Activated CD4-positive, alpha-beta T cell treated with anti-CD3 and anti-CD28 coated beads, Interleukin-2, amount 10 ng/mL, durations not matched to agents 24 days and 14 days (primary cell): ENCODE measurements at regions of chr9 and their contacts with region 1.

Region 1: GRCh38 chr9:137223078-137223970 is 1.3 kb upstream of the RNF208 start:
- DNase-seq: peak; percentile 99
- H3K4me3 Mint-ChIP-seq: peak overlapping the region; percentile 88
- H3K27ac Mint-ChIP-seq: peak overlapping the region; percentile 90
- H3K4me1 Mint-ChIP-seq: peaks cover 6% of the 10 kb centered on the region
- H3K27me3 Mint-ChIP-seq: peaks cover 2% of the 10 kb centered on the region

Region 2: DNA sequence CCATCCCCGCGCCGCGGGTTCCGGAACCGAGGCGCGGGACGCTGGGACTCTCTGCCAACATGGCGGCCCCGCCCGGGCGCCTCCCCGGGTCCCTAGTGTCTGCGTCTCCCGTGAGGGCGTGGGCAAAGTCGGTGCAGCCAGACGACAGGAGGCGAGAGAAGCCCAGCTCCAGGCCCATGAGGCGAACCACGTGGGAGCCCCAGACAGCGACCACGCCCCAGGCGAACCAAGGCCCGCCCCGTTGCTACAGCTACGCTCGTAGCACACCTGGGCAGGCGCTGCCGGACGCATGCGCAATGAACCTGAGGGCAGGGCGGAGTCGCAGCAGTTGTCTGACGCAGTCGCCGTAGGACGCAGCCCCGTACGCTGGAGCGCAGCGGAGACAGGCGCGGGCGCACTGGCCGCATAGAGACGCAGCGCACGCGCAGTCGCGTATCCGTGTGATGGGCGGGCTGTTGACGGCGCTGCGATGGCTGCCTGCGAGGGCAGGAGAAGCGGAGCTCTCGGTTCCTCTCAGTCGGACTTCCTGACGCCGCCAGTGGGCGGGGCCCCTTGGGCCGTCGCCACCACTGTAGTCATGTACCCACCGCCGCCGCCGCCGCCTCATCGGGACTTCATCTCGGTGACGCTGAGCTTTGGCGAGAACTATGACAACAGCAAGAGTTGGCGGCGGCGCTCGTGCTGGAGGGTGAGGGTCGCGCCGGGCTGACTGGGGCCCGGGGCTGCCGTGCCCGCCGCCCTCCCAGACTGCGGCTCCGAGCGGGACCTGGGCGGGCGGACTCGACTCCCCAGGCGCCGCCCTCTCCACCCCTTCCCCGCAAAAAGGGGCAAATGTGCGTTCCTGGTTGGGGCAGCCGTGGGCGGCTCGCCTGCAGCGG is 136.6 kb before region 1 on chr9 and contains the start of gene MAN1B1:
- intact Hi-C with region 1: loop called (anchors 1 kb)
- DNase-seq: peak; percentile 100
- H3K4me3 Mint-ChIP-seq: peak within 1 kb of the TSS; percentile 94
- H3K27ac Mint-ChIP-seq: peak within 1 kb of the TSS; percentile 98
- H3K4me1 Mint-ChIP-seq: peaks cover 35% of the 10 kb centered on the region
- H3K27me3 Mint-ChIP-seq: peaks cover 3% of the 10 kb centered on the region
- total RNA-seq, gene MAN1B1: 49.7 and 50.1 TPM in 2 replicates

Region 3: DNA sequence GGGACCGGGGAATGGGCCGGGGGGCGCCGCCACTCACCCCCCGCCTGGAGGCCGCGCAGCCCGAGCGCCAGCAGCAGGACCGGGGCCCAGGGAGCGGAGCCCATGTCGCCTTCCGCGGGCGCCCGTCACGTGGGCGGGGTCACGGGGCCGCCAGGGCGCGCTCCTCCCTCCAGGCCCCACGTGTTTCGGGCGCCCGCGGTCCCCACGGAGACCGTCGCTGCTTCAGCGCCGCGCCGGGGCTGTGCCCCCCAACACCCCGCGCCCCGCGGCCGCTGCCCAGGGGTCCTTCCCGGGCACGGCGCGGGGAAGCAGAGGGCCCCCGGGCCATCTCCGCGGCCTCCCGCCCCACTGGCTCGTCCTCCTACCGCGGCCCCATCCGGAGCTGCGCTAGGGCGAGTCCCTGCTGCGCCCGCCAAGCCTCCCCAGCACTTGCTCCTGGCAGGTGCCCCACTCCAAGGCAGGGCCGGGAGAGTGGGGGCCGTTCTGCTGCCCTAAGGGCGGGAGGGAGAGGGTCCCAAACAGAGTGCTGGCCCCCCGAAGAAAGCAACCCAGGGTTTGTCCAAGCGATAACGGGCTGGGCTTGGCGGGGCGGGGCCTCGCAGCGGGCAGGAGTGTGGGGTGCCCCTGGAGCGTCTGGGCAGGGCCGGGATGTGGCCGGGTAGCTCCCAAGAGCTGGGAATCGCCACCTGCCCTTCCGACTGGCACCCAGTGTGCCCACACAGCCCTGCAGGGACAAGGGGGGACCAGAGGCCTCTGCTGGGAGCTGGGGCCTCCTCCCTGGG is 108.5 kb before region 1 on chr9 and contains the start of gene DPP7:
- intact Hi-C with region 1: loop called (anchors 1 kb)
- DNase-seq: peak; percentile 96
- H3K4me3 Mint-ChIP-seq: peak within 1 kb of the TSS; percentile 83
- H3K27ac Mint-ChIP-seq: peak within 1 kb of the TSS; percentile 78
- H3K4me1 Mint-ChIP-seq: peaks cover 8% of the 10 kb centered on the region
- H3K27me3 Mint-ChIP-seq: no peaks in the 10 kb centered on the region
- total RNA-seq, gene DPP7: 365 and 375 TPM in 2 replicates

Region 4: DNA sequence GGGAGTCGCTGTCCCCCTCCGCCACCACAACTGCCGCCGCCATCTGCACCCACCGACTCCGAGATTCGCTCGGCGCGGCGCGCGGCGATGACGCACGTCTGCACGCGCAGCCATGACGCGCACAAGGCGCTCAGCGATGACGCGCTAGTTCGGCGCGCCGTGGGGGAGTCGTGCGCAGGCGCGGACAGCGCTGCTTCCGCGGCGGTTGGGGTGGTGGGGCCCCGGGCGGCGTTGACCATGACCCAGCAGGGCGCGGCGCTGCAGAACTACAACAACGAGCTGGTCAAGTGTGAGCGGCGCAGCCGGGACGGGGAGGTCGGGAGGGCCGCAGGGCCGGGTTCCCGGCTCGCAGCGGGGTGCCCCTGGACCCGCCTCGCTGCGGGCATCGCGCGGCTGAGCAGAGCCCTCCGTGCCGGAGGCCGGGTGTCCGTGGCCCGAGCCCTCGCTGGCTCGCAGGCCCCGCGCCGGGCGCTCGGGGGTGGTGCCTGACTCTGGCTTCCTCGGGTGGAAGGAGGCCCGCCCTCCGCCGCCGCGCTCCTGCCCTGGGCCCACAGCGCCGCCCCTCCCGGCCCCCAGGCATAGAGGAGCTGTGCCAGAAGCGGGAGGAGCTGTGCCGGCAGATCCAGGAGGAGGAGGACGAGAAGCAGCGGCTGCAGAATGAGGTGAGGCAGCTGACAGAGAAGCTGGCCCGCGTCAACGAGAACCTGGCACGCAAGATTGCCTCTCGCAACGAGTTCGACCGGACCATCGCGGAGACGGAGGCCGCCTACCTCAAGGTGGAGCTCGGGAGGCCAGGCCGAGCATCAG is 34.6 kb before region 1 on chr9 and contains the starts of genes ANAPC2 and SSNA1:
- intact Hi-C with region 1: loop called (anchors 1 kb)
- DNase-seq: peak; percentile 99
- H3K4me3 Mint-ChIP-seq: peak within 1 kb of the TSS; percentile 91
- H3K27ac Mint-ChIP-seq: peak within 1 kb of the TSS; percentile 94
- H3K4me1 Mint-ChIP-seq: peaks cover 22% of the 10 kb centered on the region
- H3K27me3 Mint-ChIP-seq: no peaks in the 10 kb centered on the region
- total RNA-seq, gene ANAPC2: 57.4 and 58.7 TPM in 2 replicates
- total RNA-seq, gene SSNA1: 95.1 and 95.8 TPM in 2 replicates

Region 5: DNA sequence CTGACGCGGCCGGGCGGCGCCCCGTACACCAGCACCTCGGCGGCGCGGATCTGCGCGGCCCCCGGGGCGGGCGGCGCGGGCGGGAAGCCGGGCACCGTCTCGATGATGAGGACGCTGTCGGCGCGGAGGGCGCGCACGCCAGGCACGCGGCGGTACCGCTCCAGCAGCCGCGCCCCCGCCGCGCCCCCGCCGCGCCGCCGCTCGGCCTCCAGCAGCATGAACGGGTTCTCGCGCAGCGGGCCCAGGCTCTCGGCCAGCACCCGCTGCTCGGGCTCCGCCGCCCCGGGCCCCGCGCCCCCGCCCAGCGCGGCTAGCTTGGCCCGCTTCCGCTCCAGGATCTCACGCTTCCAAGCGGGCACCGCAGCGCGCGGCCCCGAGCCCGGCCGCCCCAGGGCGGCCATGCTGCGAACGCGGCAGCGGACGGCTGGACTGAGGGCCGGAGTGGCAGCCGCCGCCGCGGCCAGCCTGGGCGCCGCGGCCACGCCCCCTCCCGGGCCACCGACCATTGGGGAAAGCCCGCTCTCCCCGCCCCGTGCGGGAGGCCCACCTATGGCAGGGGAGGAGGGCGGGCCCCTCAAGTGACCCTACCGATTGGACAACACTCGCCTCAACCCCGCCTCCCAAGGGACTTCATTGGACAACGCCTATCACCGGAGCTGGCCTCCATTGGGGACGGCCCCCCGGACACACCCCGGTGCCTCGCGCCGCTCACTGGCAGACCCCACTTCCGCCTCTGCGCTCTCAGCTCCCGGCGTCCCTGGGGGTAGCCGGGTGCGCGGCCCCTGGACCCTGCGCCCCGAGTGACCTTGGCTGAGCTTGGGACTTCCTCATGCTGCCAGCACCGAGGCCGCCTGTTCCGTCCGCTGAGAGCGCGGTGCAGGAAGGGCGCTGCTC is 22.8 kb before region 1 on chr9 and contains the start of gene TPRN:
- intact Hi-C with region 1: loop called (anchors 1 kb)
- DNase-seq: peak; percentile 100
- H3K4me3 Mint-ChIP-seq: peak within 1 kb of the TSS; percentile 87
- H3K27ac Mint-ChIP-seq: peak within 1 kb of the TSS; percentile 65
- H3K4me1 Mint-ChIP-seq: peaks cover 14% of the 10 kb centered on the region
- H3K27me3 Mint-ChIP-seq: peaks cover 2% of the 10 kb centered on the region
- total RNA-seq, gene TPRN: 15.1 and 16.3 TPM in 2 replicates

Region 6: GRCh38 chr9:137240861-137241489 is 17.7 kb after region 1 on chr9 and contains the start of gene TUBB4B:
- intact Hi-C with region 1: loop called (anchors 1 kb)
- DNase-seq: peak; percentile 99
- H3K4me3 Mint-ChIP-seq: peak within 1 kb of the TSS; percentile 90
- H3K27ac Mint-ChIP-seq: peak within 1 kb of the TSS; percentile 95
- H3K4me1 Mint-ChIP-seq: peaks cover 19% of the 10 kb centered on the region
- H3K27me3 Mint-ChIP-seq: peaks cover 2% of the 10 kb centered on the region
- total RNA-seq, gene TUBB4B: 292 and 299 TPM in 2 replicates